H1 (cell line): ENCODE measurements at regions of chr9 and their contacts with region 1.

Region 1: DNA sequence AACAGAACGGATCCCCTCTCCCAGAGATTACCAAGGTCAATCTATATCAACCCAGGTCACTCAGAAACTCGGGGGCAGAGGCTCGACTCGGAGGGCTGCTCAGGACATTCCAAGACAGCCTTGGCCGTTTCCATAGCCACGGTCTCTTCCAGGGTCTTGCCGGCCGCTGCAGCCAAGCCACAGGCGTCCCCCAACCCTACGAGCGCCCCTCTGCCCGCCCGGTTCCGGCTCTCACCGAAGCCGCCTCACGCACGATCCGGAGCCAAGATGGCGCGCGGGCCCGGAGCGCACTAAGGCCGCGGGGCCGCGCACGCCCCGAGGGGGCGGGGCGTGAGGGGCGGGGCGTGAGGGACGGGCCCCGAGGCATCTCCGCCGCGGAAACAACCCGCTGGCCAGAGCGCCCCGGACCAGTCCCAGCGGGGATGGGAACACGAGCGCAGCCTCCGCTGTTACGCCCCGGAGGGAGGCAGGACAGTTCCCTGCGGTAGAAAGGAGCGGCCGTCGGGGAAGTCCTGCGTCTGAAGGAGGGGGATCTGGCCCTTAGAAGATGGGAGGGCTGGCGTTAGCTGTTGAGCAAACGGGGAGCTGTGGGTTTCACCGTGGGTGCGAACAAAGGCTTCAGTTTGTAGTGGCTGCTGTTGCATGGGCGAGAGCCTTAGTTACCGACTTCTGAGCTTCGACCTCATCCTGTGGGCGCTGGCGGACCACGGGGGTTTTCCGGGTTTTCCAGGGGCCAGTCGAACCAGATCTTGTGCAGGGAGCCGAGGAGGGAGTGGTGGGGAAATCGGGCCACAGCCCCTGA is at the start of gene RPP25L:
- DNase-seq: peak in 1 of 2 experiments; percentile 88
- H3K4me3 ChIP-seq: peak within 1 kb of the TSS; percentile 74 to 87 (median 82)
- H3K27ac ChIP-seq: peak within 1 kb of the TSS; percentile 43; the same call in 1 of the 2 replicates
- H3K4me1 ChIP-seq: peaks cover 0 to 11% (median 6%) of the 10 kb centered on the region in 4 experiments; a peak in 6 of 7 replicates
- H3K27me3 ChIP-seq: peaks cover 0 to 6% (median 2%) of the 10 kb centered on the region in 4 experiments; a peak in 2 of 7 replicates
- CTCF ChIP-seq: peak in 1 of 3 experiments; percentile 3; a peak in 1 of 4 replicates
- EP300 ChIP-seq: no peak
- POLR2A ChIP-seq: peak in 1 of 2 experiments; percentile 44; a peak in 1 of 3 replicates
- RAD21 ChIP-seq: no peak
- total RNA-seq, gene RPP25L: 21.6 and 25.6 TPM in 2 replicates

Region 2: DNA sequence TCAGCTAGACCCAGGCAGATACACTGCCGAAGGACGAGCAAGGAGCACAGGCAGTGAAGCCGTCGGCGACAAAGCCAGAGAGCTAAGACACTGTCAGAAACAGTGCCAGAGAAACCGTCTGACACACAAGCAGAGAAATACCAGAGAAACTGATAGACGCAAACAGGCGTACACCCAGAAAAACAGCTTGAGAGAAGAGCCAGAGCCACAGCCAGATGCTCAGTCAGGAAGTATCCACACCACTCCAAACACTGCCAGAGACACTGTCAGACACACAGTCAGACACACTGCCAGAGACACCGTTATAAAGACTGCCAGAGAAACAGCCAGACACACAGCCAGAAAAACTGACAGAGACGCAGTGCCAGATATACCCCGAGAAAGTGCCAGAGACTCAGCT is 41.7 kb before region 1 on chr9:
- CTCF ChIA-PET with region 1: interaction called, 10 read pairs
- POLR2A ChIA-PET with region 1: no interaction called
- DNase-seq: no peak
- H3K4me3 ChIP-seq: no peak overlapping the region
- H3K27ac ChIP-seq: no peak overlapping the region
- H3K4me1 ChIP-seq: peaks cover 9 to 44% (median 17%) of the 10 kb centered on the region in 4 experiments
- H3K27me3 ChIP-seq: peaks cover 0 to 10% (median 5%) of the 10 kb centered on the region in 4 experiments; a peak in 3 of 7 replicates
- CTCF ChIP-seq: no peak
- EP300 ChIP-seq: no peak
- POLR2A ChIP-seq: no peak
- RAD21 ChIP-seq: no peak

Region 3: GRCh38 chr9:34628656-34629491 is 16.8 kb after region 1 on chr9 and contains the start of gene ARID3C:
- CTCF ChIA-PET with region 1: interaction called, 401 read pairs
- POLR2A ChIA-PET with region 1: interaction called, 17 read pairs
- DNase-seq: peak in 1 of 2 experiments; percentile 70
- H3K4me3 ChIP-seq: peak within 1 kb of the TSS; percentile 9 to 59 (median 40)
- H3K27ac ChIP-seq: no peak within 1 kb of the TSS
- H3K4me1 ChIP-seq: peaks cover 0 to 18% (median 6%) of the 10 kb centered on the region in 4 experiments; a peak in 6 of 7 replicates
- H3K27me3 ChIP-seq: peaks cover 58 to 75% (median 74%) of the 10 kb centered on the region in 4 experiments
- CTCF ChIP-seq: no peak
- EP300 ChIP-seq: no peak
- POLR2A ChIP-seq: no peak
- RAD21 ChIP-seq: no peak
- total RNA-seq, gene ARID3C: not detected in 2 replicates

Region 4: DNA sequence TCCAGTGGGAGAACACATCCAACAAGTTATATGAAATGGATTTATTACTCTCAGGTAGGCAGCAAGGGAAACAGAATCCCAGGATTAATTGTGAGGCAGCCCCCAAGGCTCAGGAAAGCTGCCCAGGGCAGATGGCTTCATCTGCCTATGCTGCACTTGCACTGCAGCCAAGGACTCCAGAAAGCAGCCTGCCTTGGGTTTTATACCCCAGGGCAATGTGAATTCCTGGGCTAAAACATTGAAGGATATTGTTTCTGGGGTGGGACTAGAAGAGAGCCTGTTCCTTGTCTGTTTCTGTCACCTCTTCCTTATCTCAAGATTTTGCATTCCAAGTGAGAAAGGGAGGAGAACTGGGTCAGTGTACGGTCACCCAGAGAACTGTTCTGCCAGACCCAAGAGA is 59.3 kb after region 1 on chr9:
- CTCF ChIA-PET with region 1: no interaction called
- POLR2A ChIA-PET with region 1: no interaction called
- DNase-seq: no peak
- H3K4me3 ChIP-seq: no peak overlapping the region
- H3K27ac ChIP-seq: no peak overlapping the region
- H3K4me1 ChIP-seq: peaks cover 0 to 2% (median under 1%) of the 10 kb centered on the region in 4 experiments; a peak in 1 of 7 replicates
- H3K27me3 ChIP-seq: no peaks in the 10 kb centered on the region
- CTCF ChIP-seq: no peak
- EP300 ChIP-seq: no peak
- POLR2A ChIP-seq: no peak
- RAD21 ChIP-seq: no peak

Region 5: DNA sequence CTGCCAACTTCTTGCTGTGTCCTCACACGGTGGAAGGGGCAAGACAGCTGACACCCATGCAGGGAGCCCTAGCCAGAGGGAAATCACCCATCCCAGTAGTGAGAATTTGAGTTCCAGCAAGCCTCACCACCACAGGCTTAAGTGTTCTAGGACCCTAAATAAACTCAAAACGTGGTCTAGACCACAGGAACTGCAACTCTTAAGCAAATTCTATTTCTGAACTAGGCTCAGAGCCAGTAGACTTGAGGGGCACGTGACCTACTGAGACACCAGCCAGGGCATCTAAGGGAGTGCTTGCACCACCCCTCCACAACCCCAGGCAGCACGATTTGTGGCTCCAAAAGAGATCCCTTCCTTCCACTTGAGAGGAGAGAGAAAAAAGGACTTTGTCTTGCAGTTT is 250.0 kb after region 1 on chr9:
- CTCF ChIA-PET with region 1: no interaction called
- POLR2A ChIA-PET with region 1: no interaction called
- DNase-seq: no peak
- H3K4me3 ChIP-seq: no peak overlapping the region
- H3K27ac ChIP-seq: no peak overlapping the region
- H3K4me1 ChIP-seq: no peaks in the 10 kb centered on the region
- H3K27me3 ChIP-seq: no peaks in the 10 kb centered on the region
- CTCF ChIP-seq: no peak
- EP300 ChIP-seq: no peak
- POLR2A ChIP-seq: no peak
- RAD21 ChIP-seq: no peak